Psoas muscle (tissue), 8 donors: ENCODE measurements at regions of chr12 and their contacts with region 1.

Region 1: GRCh38 chr12:20601668-20602280 is 93.4 kb upstream of the SLCO1C1 start:
- DNase-seq: no peak
- ATAC-seq: no peak
- H3K4me3 ChIP-seq: no peak overlapping the region
- H3K27ac ChIP-seq: no peak overlapping the region
- H3K4me1 ChIP-seq: no peaks in the 10 kb centered on the region
- H3K27me3 ChIP-seq: no peaks in the 10 kb centered on the region
- CTCF ChIP-seq: peak; percentile 38

Region 2: GRCh38 chr12:20451761-20452160 is 150.0 kb before region 1 on chr12:
- intact Hi-C with region 1: loop called in 1 of 2 experiments (anchors 10 kb)
- DNase-seq: no peak
- ATAC-seq: no peak
- H3K4me3 ChIP-seq: no peak overlapping the region
- H3K27ac ChIP-seq: no peak overlapping the region
- H3K4me1 ChIP-seq: no peaks in the 10 kb centered on the region
- H3K27me3 ChIP-seq: peaks cover 0 to 2% (median 0%) of the 10 kb centered on the region in 3 donors
- CTCF ChIP-seq: no peak

Region 3: GRCh38 chr12:20646239-20646827 is 44.6 kb after region 1 on chr12:
- intact Hi-C with region 1: no loop called
- DNase-seq: no peak
- ATAC-seq: no peak
- H3K4me3 ChIP-seq: no peak overlapping the region
- H3K27ac ChIP-seq: no peak overlapping the region
- H3K4me1 ChIP-seq: no peaks in the 10 kb centered on the region
- H3K27me3 ChIP-seq: no peaks in the 10 kb centered on the region
- CTCF ChIP-seq: peak; percentile 36